Right lobe of liver (tissue), 6 donors: ENCODE measurements at regions of chr6 and their contacts with region 1.

Region 1: DNA sequence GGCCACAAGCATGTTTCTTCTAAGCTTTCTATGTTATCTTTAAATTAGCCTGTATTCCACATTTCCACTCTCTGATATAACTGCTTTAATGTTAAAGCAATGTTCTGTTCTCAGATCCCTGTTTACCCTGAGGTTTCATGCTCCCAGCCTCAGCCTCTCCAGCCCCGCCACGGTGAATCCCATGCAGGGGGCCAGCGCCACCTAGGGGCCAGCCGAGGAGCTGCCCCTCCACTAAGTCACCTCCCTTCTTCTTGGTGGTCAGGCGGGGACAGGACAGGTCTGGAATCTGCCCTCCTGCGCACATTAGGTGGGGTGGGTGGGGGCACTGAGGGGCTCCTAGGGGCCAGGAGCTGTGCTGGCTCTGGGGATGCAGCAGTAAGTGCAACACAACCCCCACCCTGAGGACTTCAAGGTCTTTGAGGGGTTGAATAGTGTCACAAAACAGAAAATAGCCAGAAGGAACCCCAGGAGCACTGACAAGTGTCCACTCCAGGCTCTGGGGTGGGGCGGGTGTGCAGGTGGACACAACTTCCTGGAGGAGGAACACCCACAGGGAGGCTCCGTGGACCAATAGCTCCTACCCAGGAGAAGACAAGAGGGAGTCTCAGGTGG is 61.6 kb downstream of the RAB44 start:
- DNase-seq: peak; percentile 81 to 86 (median 84)
- ATAC-seq: peak; percentile 90 to 96 (median 94)
- H3K4me3 ChIP-seq: no peak overlapping the region
- H3K27ac ChIP-seq: no peak overlapping the region
- H3K4me1 ChIP-seq: no peaks in the 10 kb centered on the region
- H3K27me3 ChIP-seq: no peaks in the 10 kb centered on the region
- CTCF ChIP-seq: peak; percentile 93 to 96 (median 94)
- POLR2A ChIP-seq: no peak

Region 2: DNA sequence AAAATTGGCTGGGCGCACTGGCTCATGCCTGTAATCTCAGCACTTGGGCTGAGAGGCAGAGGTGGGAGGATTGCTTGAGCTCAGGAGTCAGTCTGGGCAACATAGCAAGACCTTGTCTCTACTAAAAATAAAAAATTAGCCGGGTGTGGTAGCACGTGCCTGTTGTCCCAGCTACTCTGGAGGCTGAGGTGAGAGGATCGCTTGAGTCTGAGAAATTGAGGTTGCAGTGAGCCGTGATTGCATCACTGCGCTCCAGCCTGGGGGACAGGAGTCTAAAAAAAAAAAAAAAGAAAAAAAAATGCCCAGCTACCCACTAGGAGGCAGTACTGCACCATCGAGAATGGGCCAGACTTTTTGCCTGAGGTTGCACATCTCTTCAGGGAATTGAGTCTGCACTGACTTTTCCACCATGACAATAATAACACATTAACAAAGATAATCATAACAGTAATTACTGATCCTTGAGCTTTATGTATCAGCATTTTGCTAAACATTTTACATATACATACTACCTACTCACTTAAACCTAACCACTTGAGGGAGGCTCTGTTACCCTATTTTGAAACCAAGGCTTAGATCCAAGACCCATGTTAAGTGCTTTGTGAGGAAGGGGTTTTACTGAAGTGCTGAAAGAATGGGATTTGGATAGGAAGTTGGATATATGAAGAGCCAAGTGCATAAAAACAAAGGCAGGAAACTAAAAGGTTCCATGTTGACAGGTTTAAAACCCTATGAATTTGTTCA is 144.1 kb before region 1 on chr6:
- intact Hi-C with region 1: loop called in 1 of 2 experiments (anchors 10 kb)
- DNase-seq: peak; percentile 30 to 49 (median 39)
- ATAC-seq: peak; percentile 49 to 72 (median 56)
- H3K4me3 ChIP-seq: no peak overlapping the region
- H3K27ac ChIP-seq: no peak overlapping the region
- H3K4me1 ChIP-seq: peaks cover 0 to 22% (median 9%) of the 10 kb centered on the region in 4 donors
- H3K27me3 ChIP-seq: no peaks in the 10 kb centered on the region
- CTCF ChIP-seq: peak; percentile 59 to 71 (median 60)
- POLR2A ChIP-seq: no peak